Lower leg skin (tissue), 4 donors: ENCODE measurements at regions of chr10 and their contacts with region 1.

Region 1: DNA sequence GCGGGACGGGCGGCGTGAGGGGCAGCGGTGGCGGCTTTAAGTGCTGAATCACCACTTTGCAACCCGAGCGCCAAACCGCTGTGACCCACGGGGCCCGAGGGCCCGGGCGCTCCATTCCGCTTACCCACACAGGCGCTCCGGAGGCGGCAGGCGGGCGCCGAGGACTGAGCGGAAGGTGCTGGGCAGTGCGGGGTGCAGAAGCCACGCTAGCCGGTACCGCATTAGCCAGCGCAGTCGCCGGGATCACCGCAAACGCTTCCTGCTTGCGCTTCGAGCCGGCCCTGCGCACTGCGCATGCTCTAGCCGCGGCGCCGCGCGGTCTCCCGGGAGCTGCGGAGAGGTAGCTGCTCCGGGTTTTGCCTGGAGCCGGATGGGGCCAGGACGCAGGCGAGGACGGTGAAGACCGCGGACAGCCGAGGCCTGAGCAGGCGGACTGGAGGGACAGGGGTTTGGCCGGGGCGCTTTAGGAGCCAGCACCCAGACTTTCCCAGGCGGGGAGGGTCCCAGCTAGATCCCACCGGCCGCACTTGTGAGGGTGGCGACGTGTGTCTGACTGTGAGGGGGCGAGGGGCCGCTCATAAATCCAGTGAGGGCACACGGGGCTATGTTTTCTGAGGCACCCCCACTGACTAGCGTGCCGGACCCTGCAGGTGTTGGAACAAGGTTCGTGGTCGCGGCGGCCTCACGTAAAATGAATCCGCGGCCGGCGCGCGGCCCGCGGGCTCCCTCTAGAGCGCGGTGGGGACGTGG is at the start of gene IDE:
- DNase-seq: peak; percentile 69 to 96
- H3K4me3 ChIP-seq: peak within 1 kb of the TSS; percentile 84
- CTCF ChIP-seq: peak in 1 of 3 donors; percentile 45
- POLR2A ChIP-seq: no peak
- total RNA-seq, gene IDE: 189 to 443 (median 287) TPM

Region 2: GRCh38 chr10:92517034-92517655 is 56.8 kb before region 1 on chr10:
- intact Hi-C with region 1: loop called (anchors 5 kb)
- DNase-seq: peak in 1 of 2 donors; percentile 62
- H3K4me3 ChIP-seq: no peak overlapping the region
- CTCF ChIP-seq: no peak
- POLR2A ChIP-seq: no peak

Region 3: DNA sequence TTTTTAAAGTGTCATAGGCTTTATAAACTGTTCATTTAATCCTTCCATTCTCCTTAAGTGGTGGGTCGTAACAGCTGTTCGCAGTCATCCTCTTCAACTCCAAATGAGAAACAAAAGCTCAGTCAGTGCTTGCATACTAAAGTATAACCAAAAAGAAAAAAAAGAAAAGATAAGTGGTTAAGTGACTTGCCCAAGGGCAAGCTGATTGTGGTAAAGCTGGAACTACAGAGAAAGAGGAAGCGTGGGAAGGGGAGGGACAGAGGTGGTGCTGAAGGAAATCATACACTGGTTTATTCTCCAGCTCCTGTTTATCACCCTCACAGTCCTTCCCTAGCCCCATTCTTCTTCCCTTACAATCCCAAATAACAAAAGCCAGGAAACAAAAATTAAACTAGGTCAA is 29.7 kb before region 1 on chr10:
- intact Hi-C with region 1: no loop called
- DNase-seq: no peak
- H3K4me3 ChIP-seq: no peak overlapping the region
- CTCF ChIP-seq: no peak
- POLR2A ChIP-seq: no peak